ENCODE measurements at regions of chr17 and their contacts with region 1.

Region 1: GRCh38 chr17:58487589-58488427 is at the start of gene HSF5:
- DNase-seq: peak; percentile 92
- ATAC-seq: peak; percentile 94
- H3K4me3 ChIP-seq: peak within 1 kb of the TSS in 4 of 5 experiments; percentile 40 to 60 (median 56)
- H3K4me3 Mint-ChIP-seq: peak within 1 kb of the TSS; percentile 86
- H3K27ac ChIP-seq: peak within 1 kb of the TSS; percentile 13 to 79
- H3K27ac Mint-ChIP-seq: peak within 1 kb of the TSS; percentile 83
- H3K4me1 ChIP-seq: peaks cover 6 to 11% of the 10 kb centered on the region in 2 donors
- H3K4me1 Mint-ChIP-seq: peaks cover 11% of the 10 kb centered on the region
- H3K27me3 ChIP-seq: no peaks in the 10 kb centered on the region
- H3K27me3 Mint-ChIP-seq: no peaks in the 10 kb centered on the region
- CTCF ChIP-seq: peak; percentile 81
- total RNA-seq, gene HSF5: 4.8 and 5.1 TPM in 2 replicates

Region 2: DNA sequence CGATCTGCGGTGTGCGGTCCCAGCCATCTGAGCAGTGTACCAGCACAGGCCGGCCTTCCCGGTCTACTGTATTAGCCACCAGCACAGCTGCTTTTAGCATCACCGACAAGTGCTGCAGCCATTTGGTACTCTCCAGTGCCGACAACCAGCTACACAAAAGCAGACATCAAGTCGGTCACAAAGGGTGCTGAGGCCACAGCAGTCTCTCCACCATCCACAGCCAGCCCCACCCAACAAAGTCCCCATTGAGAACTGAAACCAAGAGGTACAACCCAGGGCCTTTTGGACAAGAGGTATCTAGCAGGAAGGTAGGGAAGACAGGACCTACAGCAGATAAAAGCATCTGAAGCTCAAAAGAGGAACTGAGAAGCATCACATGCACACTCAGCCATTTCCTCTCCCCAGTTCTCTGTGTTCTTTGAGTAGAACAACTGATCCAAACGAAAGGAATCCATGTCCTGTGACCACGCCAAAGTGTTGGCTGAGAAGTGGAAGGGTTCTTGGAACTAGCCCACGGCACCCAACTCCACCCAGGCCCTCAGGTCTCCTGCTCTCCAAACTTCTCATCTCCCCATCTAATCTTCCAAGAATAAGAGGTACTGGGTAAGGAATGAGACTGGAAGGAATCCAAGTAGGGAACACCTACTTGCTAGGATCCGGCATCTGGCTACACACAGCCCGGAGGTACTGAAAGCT is 17.2 kb after region 1 on chr17:
- CTCF ChIA-PET with region 1: interaction called, 25 read pairs
- POLR2A ChIA-PET with region 1: interaction called, 6 read pairs
- intact Hi-C with region 1: loop called (anchors 1 kb)
- DNase-seq: peak; percentile 88
- ATAC-seq: peak; percentile 93
- H3K4me3 ChIP-seq: peak overlapping the region in 2 of 5 experiments; percentile 6 to 47
- H3K4me3 Mint-ChIP-seq: peak overlapping the region; percentile 68
- H3K27ac ChIP-seq: peak overlapping the region; percentile 91 to 92
- H3K27ac Mint-ChIP-seq: peak overlapping the region; percentile 99
- H3K4me1 ChIP-seq: peaks cover 20 to 25% of the 10 kb centered on the region in 2 donors
- H3K4me1 Mint-ChIP-seq: peaks cover 27% of the 10 kb centered on the region
- H3K27me3 ChIP-seq: no peaks in the 10 kb centered on the region
- H3K27me3 Mint-ChIP-seq: no peaks in the 10 kb centered on the region
- CTCF ChIP-seq: no peak

Region 3: DNA sequence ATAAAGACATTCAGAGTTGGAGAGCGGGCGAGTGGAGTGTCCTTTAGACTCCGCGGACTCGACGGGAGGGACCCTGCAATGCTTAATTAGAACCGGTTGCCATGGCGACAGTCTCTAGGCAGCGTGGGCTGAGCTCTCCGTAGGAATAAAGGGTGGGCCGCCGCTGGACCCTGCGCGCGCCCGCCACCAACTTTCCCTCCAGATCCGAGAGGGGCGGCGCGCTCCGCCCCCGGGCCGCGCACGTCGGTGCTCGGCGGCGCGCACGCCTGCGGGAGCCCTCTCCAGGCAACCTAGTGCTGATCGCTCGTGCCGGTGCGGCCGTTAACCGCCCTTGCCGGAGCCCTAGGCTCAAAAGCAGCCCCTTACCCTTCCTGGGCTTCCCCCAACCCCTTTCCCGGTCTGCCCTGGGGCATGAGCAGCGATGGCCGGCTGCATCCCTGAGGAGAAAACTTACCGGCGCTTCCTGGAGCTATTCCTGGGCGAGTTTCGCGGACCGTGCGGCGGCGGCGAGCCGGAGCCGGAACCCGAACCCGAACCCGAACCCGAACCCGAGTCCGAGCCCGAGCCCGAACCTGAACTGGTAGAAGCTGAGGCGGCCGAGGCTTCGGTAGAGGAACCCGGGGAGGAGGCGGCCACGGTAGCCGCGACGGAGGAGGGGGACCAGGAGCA is 267.9 kb after region 1 on chr17 and contains the start of gene PPM1E:
- CTCF ChIA-PET with region 1: no interaction called
- POLR2A ChIA-PET with region 1: no interaction called
- intact Hi-C with region 1: no loop called
- DNase-seq: peak; percentile 61
- ATAC-seq: peak; percentile 63
- H3K4me3 ChIP-seq: peak within 1 kb of the TSS in 4 of 5 experiments; percentile 57 to 68 (median 62)
- H3K4me3 Mint-ChIP-seq: peak within 1 kb of the TSS; percentile 97
- H3K27ac ChIP-seq: no peak within 1 kb of the TSS
- H3K27ac Mint-ChIP-seq: no peak within 1 kb of the TSS
- H3K4me1 ChIP-seq: peaks cover 15 to 22% of the 10 kb centered on the region in 2 donors
- H3K4me1 Mint-ChIP-seq: peaks cover 14% of the 10 kb centered on the region
- H3K27me3 ChIP-seq: peaks cover 0 to 40% (median 34%) of the 10 kb centered on the region in 4 experiments
- H3K27me3 Mint-ChIP-seq: peaks cover 41% of the 10 kb centered on the region
- CTCF ChIP-seq: no peak
- total RNA-seq, gene PPM1E: not detected in 2 replicates

Region 4: DNA sequence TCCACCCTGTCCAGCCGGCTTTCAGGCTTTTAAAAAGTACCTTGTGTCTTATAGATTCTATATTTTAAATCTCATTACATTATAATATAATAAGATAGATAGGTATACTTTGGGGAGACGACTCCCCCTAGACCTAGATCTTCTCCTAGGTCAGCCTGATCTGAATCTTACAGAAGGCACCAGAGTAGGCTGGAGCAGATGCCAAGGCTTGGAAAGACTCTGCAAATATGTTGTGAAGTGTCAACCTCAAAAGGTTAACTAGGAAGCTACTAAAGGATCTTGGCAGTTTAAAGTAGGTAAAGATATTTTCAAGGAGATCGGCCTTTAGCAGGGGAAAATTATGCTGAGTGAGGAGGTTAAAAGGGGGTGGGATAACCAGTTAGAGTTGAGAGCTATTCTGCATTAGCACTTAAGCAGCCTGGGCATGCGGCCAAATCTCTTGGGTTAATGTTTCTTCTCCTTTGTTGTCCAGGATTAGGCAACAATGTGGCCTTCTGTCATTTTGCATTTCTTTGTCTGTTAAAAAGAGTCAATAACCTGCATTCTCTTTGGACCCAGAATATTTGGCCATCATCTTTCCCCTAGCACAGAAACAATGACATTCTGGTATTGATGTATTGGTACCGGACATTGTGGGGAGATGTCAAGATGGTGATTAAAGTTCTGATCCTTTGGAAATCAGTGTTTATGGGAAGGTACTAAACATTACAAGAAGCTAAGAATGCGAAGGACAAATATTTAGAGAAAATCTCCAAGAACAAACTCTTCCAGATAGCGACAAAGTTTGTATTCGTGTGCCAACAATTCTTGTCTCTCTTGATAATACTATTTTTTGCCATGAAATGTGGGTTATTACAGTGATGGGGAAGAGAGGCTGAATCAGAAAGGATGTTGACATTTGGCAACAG is 1026.4 kb after region 1 on chr17:
- CTCF ChIA-PET with region 1: no interaction called
- POLR2A ChIA-PET with region 1: no interaction called
- intact Hi-C with region 1: no loop called
- DNase-seq: no peak
- ATAC-seq: no peak
- H3K4me3 ChIP-seq: no peak overlapping the region
- H3K4me3 Mint-ChIP-seq: no peak overlapping the region
- H3K27ac ChIP-seq: no peak overlapping the region
- H3K27ac Mint-ChIP-seq: no peak overlapping the region
- H3K4me1 ChIP-seq: no peaks in the 10 kb centered on the region
- H3K4me1 Mint-ChIP-seq: no peaks in the 10 kb centered on the region
- H3K27me3 ChIP-seq: peaks cover 0 to 3% (median 0%) of the 10 kb centered on the region in 4 experiments
- H3K27me3 Mint-ChIP-seq: peaks cover 12% of the 10 kb centered on the region
- CTCF ChIP-seq: no peak

Measured in B cell (primary cell).